ENCODE measurements at regions of chr19 and their contacts with region 1.

Region 1: GRCh38 chr19:46753420-46754155 is 7.3 kb upstream of the STRN4 start:
- DNase-seq: peak; percentile 49 to 68 (median 65)
- ATAC-seq: peak; percentile 91
- H3K4me3 ChIP-seq: no peak overlapping the region
- H3K4me3 Mint-ChIP-seq: no peak overlapping the region
- H3K27ac ChIP-seq: no peak overlapping the region
- H3K27ac Mint-ChIP-seq: peak overlapping the region in 2 of 9 donors; percentile 45 to 65
- H3K4me1 ChIP-seq: no peaks in the 10 kb centered on the region
- H3K4me1 Mint-ChIP-seq: peaks cover 6 to 21% (median 13%) of the 10 kb centered on the region in 7 donors
- H3K27me3 ChIP-seq: no peaks in the 10 kb centered on the region
- H3K27me3 Mint-ChIP-seq: no peaks in the 10 kb centered on the region

Region 2: DNA sequence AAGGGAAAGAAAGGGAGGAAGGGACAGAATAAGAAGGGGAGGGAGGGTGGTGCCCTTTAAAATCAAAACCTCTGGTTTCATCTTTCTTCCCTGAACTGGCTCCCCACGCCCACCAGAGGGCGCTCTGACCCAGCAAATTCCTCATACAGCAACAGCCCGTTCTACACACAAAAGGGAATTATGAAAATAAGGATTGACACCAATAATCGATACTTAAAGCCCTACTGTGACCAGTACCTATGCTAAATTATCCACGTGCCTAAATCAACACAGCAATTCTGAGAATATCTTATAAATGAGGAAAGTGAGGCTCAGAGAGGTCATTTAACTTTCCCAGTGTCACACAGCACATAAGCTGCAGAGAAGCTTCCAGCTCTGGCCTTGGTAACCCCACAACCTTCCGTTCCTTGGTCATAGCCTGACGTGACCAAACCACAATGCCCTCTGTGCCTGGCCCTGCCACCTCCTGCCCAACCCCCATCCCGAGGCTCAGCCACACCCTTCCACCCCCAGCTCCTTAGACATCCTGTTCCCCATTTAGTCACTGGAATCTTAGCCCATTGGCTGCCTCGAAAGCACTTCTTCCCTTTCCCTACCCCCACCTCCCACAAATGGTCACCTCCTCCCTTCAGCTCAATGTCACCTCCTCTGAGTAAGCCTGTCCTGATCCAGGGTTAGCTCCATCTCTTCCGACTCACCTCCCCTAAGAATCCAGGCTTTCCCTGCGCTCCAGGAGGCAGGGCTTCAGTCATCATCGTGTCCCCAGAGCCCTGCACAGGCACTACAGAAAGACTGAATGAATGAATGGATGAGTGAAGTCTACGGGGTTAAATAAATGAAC is 223.7 kb before region 1 on chr19:
- CTCF ChIA-PET with region 1: interaction called, 3 read pairs
- POLR2A ChIA-PET with region 1: no interaction called
- intact Hi-C with region 1: loop called (anchors 1 kb)
- DNase-seq: peak; percentile 57 to 83 (median 73)
- ATAC-seq: peak; percentile 95
- H3K4me3 ChIP-seq: no peak overlapping the region
- H3K4me3 Mint-ChIP-seq: peak overlapping the region in 4 of 10 donors; percentile 1 to 65 (median 32)
- H3K27ac ChIP-seq: no peak overlapping the region
- H3K27ac Mint-ChIP-seq: peak overlapping the region in 7 of 9 donors; percentile 17 to 89 (median 68)
- H3K4me1 ChIP-seq: peaks cover 8 to 19% of the 10 kb centered on the region in 2 donors
- H3K4me1 Mint-ChIP-seq: peaks cover 15 to 35% (median 23%) of the 10 kb centered on the region in 7 donors
- H3K27me3 ChIP-seq: no peaks in the 10 kb centered on the region
- H3K27me3 Mint-ChIP-seq: no peaks in the 10 kb centered on the region

Region 3: DNA sequence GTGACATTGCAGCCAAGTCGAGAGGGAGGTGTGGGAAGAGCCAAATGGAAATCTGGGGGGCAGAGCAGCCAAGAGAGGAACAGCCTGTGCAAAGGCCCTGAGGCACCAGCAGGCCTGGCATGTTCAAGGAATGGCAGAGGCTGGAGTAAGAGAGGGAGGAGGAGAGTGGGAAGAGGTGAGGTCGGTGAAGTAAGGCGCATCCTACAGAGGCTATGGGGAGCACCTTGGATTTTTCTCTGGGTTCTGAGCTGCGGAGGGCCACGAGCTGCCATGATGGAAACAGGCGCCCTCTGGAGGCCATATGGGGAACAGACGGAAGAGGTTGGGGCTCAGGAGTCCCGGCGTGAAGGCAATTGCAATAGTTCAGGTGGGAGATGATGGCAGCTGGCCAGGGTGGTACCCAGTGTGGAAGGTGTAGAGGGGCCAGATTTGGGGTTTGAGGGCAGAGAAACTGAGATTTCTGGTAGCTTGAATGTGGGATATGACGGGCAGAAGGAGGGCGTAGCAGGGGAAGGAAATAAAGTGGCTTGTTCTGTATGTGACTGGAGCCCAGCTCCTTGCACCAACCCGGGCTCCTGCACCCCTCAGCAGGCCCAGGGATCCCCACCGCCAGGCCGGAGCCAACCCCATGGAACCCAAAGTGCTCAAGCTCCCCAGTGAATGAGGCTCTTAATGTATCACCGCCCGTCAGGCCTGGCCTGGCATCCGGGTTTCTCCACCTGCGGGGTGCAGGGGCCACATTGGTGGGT is 13.2 kb after region 1 on chr19:
- CTCF ChIA-PET with region 1: interaction called, 5 read pairs
- POLR2A ChIA-PET with region 1: no interaction called
- intact Hi-C with region 1: loop called in 1 of 2 experiments (anchors 1 kb)
- DNase-seq: peak in 7 of 9 donors; percentile 37 to 58 (median 46)
- ATAC-seq: peak; percentile 80
- H3K4me3 ChIP-seq: no peak overlapping the region
- H3K4me3 Mint-ChIP-seq: peak overlapping the region in 1 of 10 donors; percentile 46
- H3K27ac ChIP-seq: no peak overlapping the region
- H3K27ac Mint-ChIP-seq: peak overlapping the region in 2 of 9 donors; percentile 16 to 70
- H3K4me1 ChIP-seq: no peaks in the 10 kb centered on the region
- H3K4me1 Mint-ChIP-seq: peaks cover 0 to 7% (median 5%) of the 10 kb centered on the region in 7 donors
- H3K27me3 ChIP-seq: no peaks in the 10 kb centered on the region
- H3K27me3 Mint-ChIP-seq: no peaks in the 10 kb centered on the region

Region 4: DNA sequence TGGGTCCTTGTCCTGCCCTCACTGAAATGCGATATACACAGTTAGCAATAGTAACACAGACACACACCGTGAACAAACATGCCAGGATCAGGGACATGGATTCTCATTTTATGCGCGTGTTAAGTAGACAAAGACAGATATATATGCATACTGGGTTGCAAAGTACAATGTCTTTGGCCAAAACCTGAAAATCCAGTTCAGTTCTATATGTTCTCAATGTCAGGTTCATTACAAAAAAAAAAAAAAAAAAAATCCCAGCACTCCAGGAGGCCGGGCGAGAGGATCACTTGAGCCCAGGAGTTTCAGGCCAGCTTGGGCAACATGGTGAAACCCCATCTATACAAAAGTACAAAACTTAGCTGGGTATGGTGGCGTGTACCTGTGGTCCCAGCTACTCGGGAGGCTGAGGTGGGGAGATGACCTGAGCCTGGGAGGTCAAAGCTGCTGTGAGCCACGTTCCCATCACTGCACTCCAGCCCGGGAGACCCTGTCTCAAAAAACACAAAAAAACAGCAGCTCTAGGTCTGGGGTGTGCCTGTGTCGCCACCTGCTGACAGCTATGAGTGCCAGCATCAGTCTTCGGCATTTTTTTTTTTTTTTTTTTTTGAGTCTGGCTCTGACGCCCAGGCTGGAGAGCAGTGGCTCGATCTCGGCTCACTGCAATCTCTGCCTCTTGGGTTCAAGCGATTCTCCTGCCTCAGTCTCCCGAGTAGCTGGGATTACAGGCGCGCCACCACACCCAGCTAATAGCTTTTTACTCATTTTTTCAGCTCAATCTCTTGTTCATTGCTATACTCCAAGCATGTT is 86.8 kb after region 1 on chr19:
- CTCF ChIA-PET with region 1: interaction called, 49 read pairs
- POLR2A ChIA-PET with region 1: interaction called, 4 read pairs
- intact Hi-C with region 1: loop called (anchors 1 kb)
- DNase-seq: peak in 8 of 9 donors; percentile 23 to 65 (median 51)
- ATAC-seq: peak; percentile 93
- H3K4me3 ChIP-seq: no peak overlapping the region
- H3K4me3 Mint-ChIP-seq: no peak overlapping the region
- H3K27ac ChIP-seq: no peak overlapping the region
- H3K27ac Mint-ChIP-seq: peak overlapping the region in 2 of 9 donors; percentile 9 to 57
- H3K4me1 ChIP-seq: no peaks in the 10 kb centered on the region
- H3K4me1 Mint-ChIP-seq: peaks cover 0 to 11% (median 0%) of the 10 kb centered on the region in 7 donors
- H3K27me3 ChIP-seq: no peaks in the 10 kb centered on the region
- H3K27me3 Mint-ChIP-seq: no peaks in the 10 kb centered on the region

Region 5: DNA sequence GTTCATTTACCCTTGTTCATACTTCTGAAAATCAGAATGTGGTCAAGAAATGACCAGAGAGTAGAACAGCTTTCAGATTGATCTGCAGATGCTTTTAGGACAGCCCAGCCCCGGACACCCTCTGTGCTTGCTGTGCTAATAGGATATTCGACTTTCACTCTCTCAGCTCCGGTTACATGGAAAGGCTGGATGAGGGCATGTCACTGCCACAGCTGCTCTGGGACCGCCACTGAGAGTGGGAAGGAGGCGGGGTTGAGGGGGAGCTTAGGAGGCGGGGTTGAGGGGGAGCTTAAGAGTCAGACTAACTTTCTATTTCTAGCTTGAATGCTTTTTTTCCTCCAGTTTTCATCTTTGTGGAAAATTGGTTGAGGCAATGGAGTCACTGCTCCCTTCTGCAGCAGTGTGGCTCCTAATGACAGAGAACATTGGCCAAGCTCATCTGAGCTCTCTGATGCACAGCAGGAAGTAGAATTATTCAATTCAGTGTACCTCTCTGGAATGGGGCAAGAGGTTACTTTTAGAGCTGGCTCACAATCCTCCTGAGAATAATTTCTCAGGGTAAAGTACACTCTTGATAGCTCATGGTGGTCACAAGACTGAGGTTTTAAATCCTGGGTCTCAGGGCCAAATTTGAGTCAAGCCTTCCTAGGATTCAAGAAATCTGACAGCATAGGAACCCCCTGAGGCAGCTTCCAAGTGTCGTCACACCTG is 191.5 kb after region 1 on chr19:
- CTCF ChIA-PET with region 1: no interaction called
- POLR2A ChIA-PET with region 1: no interaction called
- intact Hi-C with region 1: no loop called
- DNase-seq: no peak
- ATAC-seq: no peak
- H3K4me3 ChIP-seq: no peak overlapping the region
- H3K4me3 Mint-ChIP-seq: no peak overlapping the region
- H3K27ac ChIP-seq: no peak overlapping the region
- H3K27ac Mint-ChIP-seq: no peak overlapping the region
- H3K4me1 ChIP-seq: peaks cover 0 to 47% of the 10 kb centered on the region in 2 donors
- H3K4me1 Mint-ChIP-seq: peaks cover 3 to 22% (median 4%) of the 10 kb centered on the region in 7 donors
- H3K27me3 ChIP-seq: no peaks in the 10 kb centered on the region
- H3K27me3 Mint-ChIP-seq: no peaks in the 10 kb centered on the region

Region 6: DNA sequence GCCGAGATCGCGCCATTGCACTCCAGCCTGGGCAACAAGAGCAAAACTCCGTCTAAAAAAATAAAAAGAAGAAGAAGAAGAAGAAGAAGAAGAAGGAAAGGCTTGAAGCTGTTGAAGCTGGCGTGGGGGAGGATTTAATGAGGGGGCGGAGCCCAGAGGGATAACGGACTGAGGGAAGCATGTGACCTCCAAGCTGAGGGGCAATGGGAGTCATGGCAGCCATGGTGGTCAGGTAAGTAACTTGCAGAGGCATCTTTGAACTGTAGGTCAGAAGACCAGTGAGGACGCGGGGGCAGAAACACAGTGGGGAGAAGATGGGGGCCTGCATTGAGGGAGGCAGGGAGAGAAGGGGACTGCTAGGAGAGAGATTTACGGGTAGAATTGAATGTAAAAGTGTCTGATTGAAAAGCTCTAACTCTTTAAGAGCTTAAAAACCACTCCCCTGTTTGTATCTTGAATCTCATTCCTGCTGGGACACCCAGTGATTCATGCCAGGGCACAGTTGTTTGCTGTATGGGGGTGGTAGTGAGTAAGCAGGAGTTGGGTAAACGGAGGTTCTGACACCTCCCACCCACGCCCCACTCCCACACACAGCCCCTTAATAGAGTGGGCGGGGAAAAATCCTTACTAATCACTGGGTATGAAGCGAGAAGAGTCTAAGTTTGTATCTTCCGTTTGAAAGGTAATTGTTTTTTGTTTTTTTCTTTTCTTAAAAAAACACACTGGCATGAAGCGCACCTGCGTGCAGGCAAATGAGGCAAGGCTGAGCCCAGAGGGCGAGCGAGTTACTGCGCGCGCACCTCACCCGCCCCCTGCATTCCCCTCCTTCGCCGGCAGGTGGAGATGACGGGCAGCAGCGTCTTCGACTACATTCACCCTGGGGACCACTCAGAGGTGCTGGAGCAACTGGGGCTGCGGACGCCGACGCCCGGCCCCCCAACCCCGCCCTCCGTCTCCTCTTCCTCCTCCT is 281.8 kb after region 1 on chr19:
- CTCF ChIA-PET with region 1: no interaction called
- POLR2A ChIA-PET with region 1: no interaction called
- intact Hi-C with region 1: loop called in 1 of 2 experiments (anchors 1 kb)
- DNase-seq: peak; percentile 91 to 100 (median 97)
- ATAC-seq: peak; percentile 99
- H3K4me3 ChIP-seq: peak overlapping the region; percentile 74
- H3K4me3 Mint-ChIP-seq: peak overlapping the region; percentile 83 to 97 (median 92)
- H3K27ac ChIP-seq: peak overlapping the region; percentile 62
- H3K27ac Mint-ChIP-seq: peak overlapping the region; percentile 71 to 93 (median 85)
- H3K4me1 ChIP-seq: peaks cover 11 to 13% of the 10 kb centered on the region in 2 donors
- H3K4me1 Mint-ChIP-seq: peaks cover 7 to 23% (median 16%) of the 10 kb centered on the region in 7 donors
- H3K27me3 ChIP-seq: no peaks in the 10 kb centered on the region
- H3K27me3 Mint-ChIP-seq: peaks cover 6 to 26% (median 14%) of the 10 kb centered on the region in 5 donors